ENCODE measurements at regions of chr4 and their contacts with region 1.

Region 1: GRCh38 chr4:153634738-153635353 is 49.2 kb upstream of the TLR2 start:
- DNase-seq: no peak
- H3K4me3 ChIP-seq: no peak overlapping the region
- H3K27ac ChIP-seq: no peak overlapping the region
- H3K4me1 ChIP-seq: no peaks in the 10 kb centered on the region
- H3K27me3 ChIP-seq: no peaks in the 10 kb centered on the region
- CTCF ChIP-seq: peak; percentile 40 to 65 (median 50)
- EP300 ChIP-seq: no peak
- POLR2A ChIP-seq: no peak

Region 2: DNA sequence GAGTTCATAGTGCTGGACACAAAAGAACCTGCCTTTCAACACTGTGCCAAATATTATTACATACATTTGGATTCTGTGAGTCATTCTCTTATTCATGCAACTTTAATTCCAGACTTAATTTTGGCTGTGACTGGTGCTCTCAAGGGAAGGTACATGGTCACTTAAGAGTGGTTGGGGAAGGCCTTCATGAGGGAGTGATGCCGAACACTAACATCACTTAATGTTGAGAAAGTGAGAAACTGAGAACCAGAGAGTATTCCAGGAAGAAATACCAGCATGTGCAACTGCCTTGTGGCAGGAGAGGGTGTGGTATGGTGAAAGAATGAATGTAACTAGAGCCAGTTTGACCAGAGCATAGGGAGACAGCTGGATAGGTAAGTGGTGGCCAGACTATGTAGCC is 740.2 kb before region 1 on chr4:
- intact Hi-C with region 1: no loop called
- DNase-seq: no peak
- H3K4me3 ChIP-seq: no peak overlapping the region
- H3K27ac ChIP-seq: no peak overlapping the region
- H3K4me1 ChIP-seq: no peaks in the 10 kb centered on the region
- H3K27me3 ChIP-seq: no peaks in the 10 kb centered on the region
- CTCF ChIP-seq: no peak
- EP300 ChIP-seq: no peak
- POLR2A ChIP-seq: no peak

Region 3: DNA sequence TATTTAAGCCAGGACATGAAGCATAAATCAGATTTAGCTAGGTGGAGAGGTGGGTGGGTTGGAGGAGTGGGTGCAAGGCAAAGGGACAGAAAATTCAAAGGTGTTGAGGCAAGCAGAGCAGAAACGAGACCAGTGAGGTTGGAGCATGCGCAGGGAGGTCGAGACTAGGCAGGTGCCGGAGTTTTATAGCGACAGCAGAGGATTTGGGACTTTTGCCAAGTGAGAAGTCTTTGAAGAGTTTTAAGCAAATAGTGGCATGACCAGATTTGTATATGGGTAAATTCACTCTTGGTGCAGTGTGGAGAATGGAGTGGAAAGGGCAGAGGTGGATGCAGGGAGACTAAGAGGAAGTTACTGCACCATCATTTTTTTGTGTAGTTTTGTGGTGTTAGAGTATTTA is 57.8 kb before region 1 on chr4:
- intact Hi-C with region 1: no loop called
- DNase-seq: no peak
- H3K4me3 ChIP-seq: no peak overlapping the region
- H3K27ac ChIP-seq: no peak overlapping the region
- H3K4me1 ChIP-seq: peaks cover 13 to 30% (median 26%) of the 10 kb centered on the region in 4 donors
- H3K27me3 ChIP-seq: no peaks in the 10 kb centered on the region
- CTCF ChIP-seq: no peak
- EP300 ChIP-seq: no peak
- POLR2A ChIP-seq: no peak

Region 4: DNA sequence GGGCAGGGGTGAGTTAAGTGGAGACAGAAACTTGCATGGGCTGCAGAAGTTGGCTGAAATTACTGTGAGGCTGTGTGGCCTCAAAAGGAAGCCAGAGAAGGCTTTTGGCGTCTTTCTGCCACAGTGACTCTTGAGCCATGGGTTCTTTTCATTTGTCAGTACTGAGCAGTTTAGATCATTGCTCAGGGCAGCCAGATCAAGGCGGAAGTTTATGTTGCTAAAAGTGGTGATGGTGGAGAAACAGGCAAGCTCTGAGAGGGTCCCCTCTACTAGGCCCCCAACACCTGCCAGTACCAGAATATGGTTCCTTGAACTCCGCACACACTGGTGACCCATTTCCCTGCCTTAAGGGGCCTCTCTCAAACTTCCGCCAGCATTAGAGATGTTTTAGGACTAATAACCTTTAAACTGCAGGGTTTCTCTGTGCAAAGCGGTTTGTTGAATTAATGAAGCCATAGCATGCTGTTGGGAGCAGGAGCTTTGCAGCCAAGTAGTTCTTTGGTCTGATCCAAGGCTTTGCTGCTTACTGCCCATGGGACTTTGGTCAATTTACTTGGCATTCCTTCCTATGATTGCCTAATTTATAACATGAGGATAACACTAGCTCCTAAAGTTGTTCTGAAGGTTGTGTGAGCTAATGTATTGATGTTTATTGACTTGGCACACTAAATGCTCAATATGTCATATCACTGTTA is 90.4 kb after region 1 on chr4:
- intact Hi-C with region 1: no loop called
- DNase-seq: no peak
- H3K4me3 ChIP-seq: no peak overlapping the region
- H3K27ac ChIP-seq: no peak overlapping the region
- H3K4me1 ChIP-seq: no peaks in the 10 kb centered on the region
- H3K27me3 ChIP-seq: no peaks in the 10 kb centered on the region
- CTCF ChIP-seq: no peak
- EP300 ChIP-seq: no peak
- POLR2A ChIP-seq: no peak

Region 5: DNA sequence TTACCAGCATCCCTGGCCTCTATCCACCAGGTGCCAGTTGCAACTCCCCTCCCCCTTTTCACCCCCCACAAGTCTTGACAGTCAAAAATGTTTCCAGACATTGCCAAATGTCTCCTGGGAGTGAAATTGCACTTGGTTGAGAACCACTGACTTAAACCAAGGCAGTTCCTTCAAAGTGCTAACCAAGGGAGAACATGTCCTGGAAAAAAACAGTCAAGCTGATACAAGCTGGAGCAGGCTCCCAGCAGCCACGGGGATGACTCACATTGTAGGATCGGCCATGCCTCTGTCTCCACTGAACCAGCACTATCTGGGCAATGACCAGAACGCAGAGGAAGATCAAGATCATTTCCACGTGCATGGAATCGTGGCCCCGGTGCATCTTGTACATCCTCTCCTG is 113.5 kb after region 1 on chr4:
- intact Hi-C with region 1: loop called (anchors 5 kb)
- DNase-seq: no peak
- H3K4me3 ChIP-seq: no peak overlapping the region
- H3K27ac ChIP-seq: no peak overlapping the region
- H3K4me1 ChIP-seq: peaks cover 0 to 4% (median 0%) of the 10 kb centered on the region in 4 donors
- H3K27me3 ChIP-seq: no peaks in the 10 kb centered on the region
- CTCF ChIP-seq: no peak
- EP300 ChIP-seq: no peak
- POLR2A ChIP-seq: no peak

Region 6: DNA sequence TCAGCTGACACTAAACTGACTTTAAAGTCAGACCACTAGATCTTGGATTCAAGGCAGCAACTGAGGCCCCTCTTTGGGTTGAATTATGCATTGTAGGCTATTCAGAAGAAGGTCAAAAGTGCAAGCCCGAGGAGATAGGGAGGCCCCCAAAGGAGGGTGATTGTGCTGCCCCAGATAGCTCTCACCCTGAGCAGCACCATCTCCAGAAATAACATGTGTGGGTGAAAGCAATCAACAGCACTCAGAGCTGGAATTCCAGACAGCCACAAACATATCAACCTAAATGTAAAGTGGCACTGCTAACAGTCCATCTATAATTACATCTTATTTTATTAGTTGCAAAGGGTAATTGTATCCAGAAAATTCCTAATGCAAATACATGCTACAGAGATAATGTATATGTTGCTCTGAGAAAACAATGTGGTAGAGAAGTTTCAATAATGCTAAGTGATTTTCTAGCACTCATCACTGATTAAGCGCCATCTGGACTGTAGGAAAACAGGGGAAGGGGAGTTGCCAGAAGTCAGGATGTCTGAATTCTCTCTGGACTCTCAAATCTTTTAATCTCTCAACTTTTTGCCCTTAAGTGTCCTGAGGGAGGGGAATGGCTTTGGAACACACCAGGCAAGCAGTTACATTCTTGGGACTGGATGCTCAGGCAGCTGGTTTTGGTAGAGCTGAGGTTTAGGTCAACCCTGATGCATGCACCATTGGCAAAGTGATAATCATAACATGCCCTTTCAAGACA is 215.9 kb after region 1 on chr4:
- intact Hi-C with region 1: no loop called
- DNase-seq: no peak
- H3K4me3 ChIP-seq: no peak overlapping the region
- H3K27ac ChIP-seq: no peak overlapping the region
- H3K4me1 ChIP-seq: no peaks in the 10 kb centered on the region
- H3K27me3 ChIP-seq: no peaks in the 10 kb centered on the region
- CTCF ChIP-seq: no peak
- EP300 ChIP-seq: no peak
- POLR2A ChIP-seq: no peak

Measured in esophagus muscularis mucosa (tissue), 4 donors.